Natural killer cell (primary cell): ENCODE measurements at regions of chr17 and their contacts with region 1.

Region 1: GRCh38 chr17:409848-410545 is 57.4 kb upstream of the RPH3AL start:
- DNase-seq: peak; percentile 99 to 100
- ATAC-seq: peak; percentile 56 to 63 (median 57)
- H3K4me3 ChIP-seq: peak overlapping the region; percentile 81
- H3K4me3 Mint-ChIP-seq: peak overlapping the region; percentile 94
- H3K27ac ChIP-seq: peak overlapping the region; percentile 95
- H3K27ac Mint-ChIP-seq: peak overlapping the region; percentile 92 to 97
- H3K4me1 ChIP-seq: peaks cover 53% of the 10 kb centered on the region
- H3K4me1 Mint-ChIP-seq: peaks cover 47 to 50% of the 10 kb centered on the region in 2 donors
- H3K27me3 ChIP-seq: no peaks in the 10 kb centered on the region
- H3K27me3 Mint-ChIP-seq: peaks cover 0 to 3% of the 10 kb centered on the region in 2 donors
- CTCF ChIP-seq: no peak

Region 2: DNA sequence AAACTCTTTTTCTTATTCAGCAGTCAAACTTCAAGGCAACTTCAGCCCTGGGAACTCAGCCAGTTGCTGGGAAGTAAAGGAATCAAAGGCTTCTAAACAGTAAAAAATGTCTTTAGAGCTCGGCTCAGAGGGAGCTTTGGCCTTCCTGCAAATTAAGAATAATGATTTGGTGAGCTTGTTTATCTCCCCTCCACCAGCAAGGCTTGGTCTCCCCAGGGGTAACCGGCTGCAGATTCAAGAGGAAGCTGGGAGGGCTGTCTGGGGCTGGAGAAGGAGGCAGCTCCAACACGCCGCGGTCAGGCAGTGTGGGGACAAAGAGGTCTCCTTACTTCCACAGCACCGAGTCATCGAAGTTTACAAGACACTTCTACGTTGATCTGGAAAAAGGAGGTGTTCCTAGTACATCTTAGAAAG is 210.8 kb before region 1 on chr17:
- intact Hi-C with region 1: no loop called
- DNase-seq: no peak
- ATAC-seq: no peak
- H3K4me3 ChIP-seq: no peak overlapping the region
- H3K4me3 Mint-ChIP-seq: no peak overlapping the region
- H3K27ac ChIP-seq: no peak overlapping the region
- H3K27ac Mint-ChIP-seq: no peak overlapping the region
- H3K4me1 ChIP-seq: no peaks in the 10 kb centered on the region
- H3K4me1 Mint-ChIP-seq: no peaks in the 10 kb centered on the region
- H3K27me3 ChIP-seq: peaks cover 5% of the 10 kb centered on the region
- H3K27me3 Mint-ChIP-seq: peaks cover 2 to 7% of the 10 kb centered on the region in 2 donors
- CTCF ChIP-seq: no peak

Region 3: GRCh38 chr17:247767-248166 is 162.2 kb before region 1 on chr17:
- intact Hi-C with region 1: no loop called
- DNase-seq: no peak
- ATAC-seq: no peak
- H3K4me3 ChIP-seq: no peak overlapping the region
- H3K4me3 Mint-ChIP-seq: no peak overlapping the region
- H3K27ac ChIP-seq: no peak overlapping the region
- H3K27ac Mint-ChIP-seq: no peak overlapping the region
- H3K4me1 ChIP-seq: no peaks in the 10 kb centered on the region
- H3K4me1 Mint-ChIP-seq: peaks cover 0 to 10% of the 10 kb centered on the region in 2 donors
- H3K27me3 ChIP-seq: no peaks in the 10 kb centered on the region
- H3K27me3 Mint-ChIP-seq: no peaks in the 10 kb centered on the region
- CTCF ChIP-seq: no peak

Region 4: DNA sequence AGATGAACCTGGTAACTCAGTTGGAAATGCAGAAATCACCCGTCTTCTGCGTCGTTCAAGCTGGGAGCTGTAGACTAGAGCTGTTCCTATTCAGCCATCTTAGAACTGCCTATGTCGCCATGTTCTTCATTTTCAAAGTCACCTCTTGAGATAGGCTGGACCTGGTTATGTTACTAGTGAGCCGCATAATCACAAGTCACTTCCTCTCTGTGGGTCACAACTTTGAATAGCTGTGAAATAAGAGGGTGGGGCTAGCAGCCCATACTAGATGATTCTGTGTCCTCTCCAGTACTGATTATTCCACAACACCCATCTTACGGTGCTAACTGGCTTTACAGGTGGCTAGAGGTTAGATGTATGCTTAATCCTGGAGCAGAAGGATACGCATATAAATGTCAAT is 230.4 kb after region 1 on chr17:
- intact Hi-C with region 1: loop called (anchors 5 kb)
- DNase-seq: peak in 1 of 2 donors; percentile 54
- ATAC-seq: peak; percentile 100
- H3K4me3 ChIP-seq: no peak overlapping the region
- H3K4me3 Mint-ChIP-seq: peak overlapping the region; percentile 81
- H3K27ac ChIP-seq: peak overlapping the region; percentile 65
- H3K27ac Mint-ChIP-seq: peak overlapping the region; percentile 91 to 94
- H3K4me1 ChIP-seq: peaks cover 18% of the 10 kb centered on the region
- H3K4me1 Mint-ChIP-seq: peaks cover 28 to 31% of the 10 kb centered on the region in 2 donors
- H3K27me3 ChIP-seq: no peaks in the 10 kb centered on the region
- H3K27me3 Mint-ChIP-seq: no peaks in the 10 kb centered on the region
- CTCF ChIP-seq: no peak

Region 5: DNA sequence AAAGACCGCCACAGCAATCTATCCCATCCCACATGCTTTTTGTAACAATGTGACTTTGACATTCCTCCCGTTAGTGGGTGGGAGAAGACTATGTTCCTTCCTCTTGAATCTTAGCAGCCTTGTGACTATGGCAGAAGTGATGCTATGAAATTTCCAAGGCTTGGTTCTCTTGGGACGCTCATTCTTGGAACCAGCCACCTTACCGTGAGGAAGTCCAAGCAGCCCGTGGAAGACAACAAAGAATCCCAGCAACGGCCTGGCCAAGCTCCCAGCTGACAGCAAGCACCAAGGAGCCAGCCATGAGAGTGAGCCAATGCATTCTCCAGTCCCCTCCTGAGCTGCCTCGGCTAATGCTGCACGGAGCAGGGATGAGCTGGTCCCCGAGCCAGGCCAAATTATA is 242.3 kb after region 1 on chr17:
- intact Hi-C with region 1: no loop called
- DNase-seq: no peak
- ATAC-seq: no peak
- H3K4me3 ChIP-seq: no peak overlapping the region
- H3K4me3 Mint-ChIP-seq: no peak overlapping the region
- H3K27ac ChIP-seq: no peak overlapping the region
- H3K27ac Mint-ChIP-seq: no peak overlapping the region
- H3K4me1 ChIP-seq: no peaks in the 10 kb centered on the region
- H3K4me1 Mint-ChIP-seq: peaks cover 9 to 14% of the 10 kb centered on the region in 2 donors
- H3K27me3 ChIP-seq: no peaks in the 10 kb centered on the region
- H3K27me3 Mint-ChIP-seq: no peaks in the 10 kb centered on the region
- CTCF ChIP-seq: no peak

Region 6: GRCh38 chr17:700504-701094 is 290.6 kb after region 1 on chr17:
- intact Hi-C with region 1: loop called (anchors 1 kb)
- DNase-seq: peak in 1 of 2 donors; percentile 76
- ATAC-seq: peak; percentile 61 to 78 (median 73)
- H3K4me3 ChIP-seq: no peak overlapping the region
- H3K4me3 Mint-ChIP-seq: no peak overlapping the region
- H3K27ac ChIP-seq: no peak overlapping the region
- H3K27ac Mint-ChIP-seq: no peak overlapping the region
- H3K4me1 ChIP-seq: no peaks in the 10 kb centered on the region
- H3K4me1 Mint-ChIP-seq: peaks cover 13% of the 10 kb centered on the region in 2 donors
- H3K27me3 ChIP-seq: no peaks in the 10 kb centered on the region
- H3K27me3 Mint-ChIP-seq: no peaks in the 10 kb centered on the region
- CTCF ChIP-seq: peak; percentile 86

Region 7: GRCh38 chr17:752002-752619 is 342.1 kb after region 1 on chr17 and contains the start of gene GEMIN4:
- intact Hi-C with region 1: loop called (anchors 1 kb)
- DNase-seq: peak; percentile 97 to 99
- ATAC-seq: peak; percentile 91 to 98 (median 93)
- H3K4me3 ChIP-seq: peak within 1 kb of the TSS; percentile 58
- H3K4me3 Mint-ChIP-seq: peak within 1 kb of the TSS; percentile 94
- H3K27ac ChIP-seq: peak within 1 kb of the TSS; percentile 54
- H3K27ac Mint-ChIP-seq: peak within 1 kb of the TSS; percentile 84 to 89
- H3K4me1 ChIP-seq: peaks cover 19% of the 10 kb centered on the region
- H3K4me1 Mint-ChIP-seq: peaks cover 23 to 42% of the 10 kb centered on the region in 2 donors
- H3K27me3 ChIP-seq: no peaks in the 10 kb centered on the region
- H3K27me3 Mint-ChIP-seq: no peaks in the 10 kb centered on the region
- CTCF ChIP-seq: peak; percentile 92
- total RNA-seq, gene GEMIN4: 13.7 to 17.1 (median 13.7) TPM

Region 8: DNA sequence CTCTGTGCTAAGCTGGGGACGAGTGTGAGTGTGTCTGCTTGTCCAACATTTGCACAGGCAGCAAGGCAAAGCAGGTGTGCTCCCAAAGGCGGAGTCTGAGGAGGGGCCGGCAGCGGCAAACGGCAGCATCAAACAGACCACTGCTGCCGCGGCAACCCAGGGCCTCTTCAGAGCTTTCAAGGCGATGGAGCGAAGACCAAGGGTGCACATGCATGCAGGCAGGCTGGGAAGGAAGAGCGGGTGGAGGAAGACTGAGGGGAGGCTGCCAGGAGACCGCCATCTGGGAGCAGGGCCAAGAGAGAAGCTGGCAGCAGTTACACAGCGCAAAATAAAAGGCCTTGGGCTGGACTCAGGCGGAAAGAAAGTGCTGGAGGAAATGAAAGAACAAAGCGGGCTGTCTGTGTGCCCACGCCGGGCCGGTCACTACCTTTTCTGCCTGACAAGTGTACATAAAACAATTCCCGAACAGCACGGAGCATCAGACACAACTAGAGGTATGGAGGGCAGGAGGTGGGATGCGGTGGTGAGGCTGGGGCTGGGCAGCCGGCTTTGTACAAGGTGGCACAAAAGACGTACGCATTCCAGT is 595.5 kb after region 1 on chr17:
- intact Hi-C with region 1: no loop called
- DNase-seq: no peak
- ATAC-seq: no peak
- H3K4me3 ChIP-seq: no peak overlapping the region
- H3K4me3 Mint-ChIP-seq: no peak overlapping the region
- H3K27ac ChIP-seq: no peak overlapping the region
- H3K27ac Mint-ChIP-seq: peak overlapping the region; percentile 38 to 45
- H3K4me1 ChIP-seq: no peaks in the 10 kb centered on the region
- H3K4me1 Mint-ChIP-seq: peaks cover 8% of the 10 kb centered on the region in 2 donors
- H3K27me3 ChIP-seq: no peaks in the 10 kb centered on the region
- H3K27me3 Mint-ChIP-seq: no peaks in the 10 kb centered on the region
- CTCF ChIP-seq: no peak